ENCODE measurements at regions of chr19 and their contacts with region 1.

Region 1: GRCh38 chr19:51570962-51571575 is at the start of gene ZNF175:
- DNase-seq: peak; percentile 90 to 96
- ATAC-seq: peak; percentile 100
- H3K4me3 ChIP-seq: peak within 1 kb of the TSS; percentile 66 to 94 (median 82)
- H3K27ac ChIP-seq: peak within 1 kb of the TSS; percentile 77 to 86 (median 82)
- H3K4me1 ChIP-seq: peaks cover 13% of the 10 kb centered on the region in 2 donors
- H3K27me3 ChIP-seq: peaks cover 0 to 11% (median 0%) of the 10 kb centered on the region in 3 donors
- CTCF ChIP-seq: no peak
- POLR2A ChIP-seq: no peak
- total RNA-seq, gene ZNF175: 2.1 to 5.0 (median 2.6) TPM

Region 2: DNA sequence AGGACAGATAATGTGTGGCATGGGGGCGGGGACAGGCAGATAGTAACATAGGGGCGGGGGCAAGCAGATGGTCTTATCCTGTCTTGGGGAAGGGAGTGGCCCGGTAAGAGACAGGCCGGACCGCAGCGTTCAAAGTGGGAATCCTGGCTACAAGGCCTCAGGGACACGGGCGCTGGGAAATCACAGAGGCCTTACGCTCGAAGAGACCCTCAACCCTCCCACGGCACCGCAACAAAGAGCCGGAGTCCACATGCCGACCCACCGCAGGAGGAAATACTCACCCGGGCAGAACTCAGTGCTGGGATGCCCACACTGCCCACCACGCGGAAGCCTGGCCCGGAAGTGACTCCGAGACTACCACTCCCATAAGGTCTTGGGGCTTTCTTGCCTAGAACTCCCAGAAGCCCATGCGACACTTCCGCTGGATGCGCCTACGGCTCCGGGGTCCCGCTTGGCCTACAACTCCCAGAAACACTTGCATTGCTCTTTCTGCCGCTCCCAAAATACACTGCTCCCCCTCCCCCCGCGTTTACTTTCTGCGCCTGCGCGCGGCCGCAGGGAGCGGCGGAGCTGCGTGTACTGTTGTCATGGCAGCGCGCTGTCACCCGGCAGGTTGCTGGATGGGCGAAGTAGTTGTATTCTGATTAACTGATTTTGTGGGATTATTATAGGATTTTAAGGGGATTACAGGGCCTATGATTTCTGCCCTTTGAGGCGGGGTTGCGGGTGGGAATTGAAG is 462.8 kb before region 1 on chr19 and contains the start of gene CTU1:
- in situ Hi-C with region 1: loop called in 1 of 4 experiments (anchors 25 kb)
- intact Hi-C with region 1: loop called (anchors 1 kb)
- DNase-seq: peak; percentile 98 to 99
- ATAC-seq: peak; percentile 100
- H3K4me3 ChIP-seq: peak within 1 kb of the TSS; percentile 65 to 87 (median 76)
- H3K27ac ChIP-seq: peak within 1 kb of the TSS; percentile 68 to 77 (median 74)
- H3K4me1 ChIP-seq: peaks cover 8 to 14% of the 10 kb centered on the region in 2 donors
- H3K27me3 ChIP-seq: no peaks in the 10 kb centered on the region
- CTCF ChIP-seq: peak in 2 of 5 experiments; percentile 24 to 26
- POLR2A ChIP-seq: peak; percentile 34 to 63
- total RNA-seq, gene CTU1: 5.8 to 11.9 (median 9.3) TPM

Region 3: DNA sequence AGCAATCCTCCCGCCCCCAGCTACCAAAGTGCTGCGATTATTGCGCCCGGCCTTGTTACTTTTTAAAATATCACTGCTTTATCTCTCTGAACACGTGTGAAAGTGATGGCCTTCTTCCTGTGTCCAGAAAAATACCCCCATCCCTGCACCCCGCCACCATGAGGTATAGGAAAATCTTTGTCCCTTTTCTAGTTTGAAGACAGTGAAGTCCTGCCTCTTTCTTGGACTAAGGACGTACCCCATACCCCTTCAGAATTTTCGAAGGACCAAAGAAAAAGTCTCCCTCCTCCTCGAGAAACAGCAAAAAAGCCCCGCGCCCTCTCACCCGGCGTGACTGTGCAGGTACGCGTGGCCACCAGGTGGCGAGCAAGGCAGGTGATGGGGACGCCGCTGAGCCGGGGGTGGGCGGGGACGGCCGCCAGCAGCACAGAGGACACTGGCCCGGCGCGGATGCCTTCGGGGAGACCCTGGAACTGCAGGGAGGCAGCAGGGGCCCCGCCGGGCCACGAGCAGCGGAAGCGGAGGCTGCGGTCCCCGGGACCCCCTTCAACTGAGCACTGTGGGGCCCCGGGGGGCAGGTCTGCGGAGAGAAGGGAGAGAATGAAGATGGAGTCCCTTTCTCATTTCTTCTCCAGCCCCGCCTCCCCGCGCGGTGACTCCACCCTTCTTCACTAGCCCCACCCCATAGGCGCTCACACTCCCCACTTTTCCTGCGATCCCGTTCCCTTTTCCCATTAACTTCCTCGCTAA is 232.3 kb before region 1 on chr19:
- in situ Hi-C with region 1: no loop called
- intact Hi-C with region 1: loop called (anchors 5 kb)
- DNase-seq: peak; percentile 36 to 48
- ATAC-seq: peak; percentile 47 to 54
- H3K4me3 ChIP-seq: peak overlapping the region; percentile 49 to 60 (median 55)
- H3K27ac ChIP-seq: peak overlapping the region in 2 of 4 donors; percentile 39 to 59
- H3K4me1 ChIP-seq: peaks cover 4 to 17% of the 10 kb centered on the region in 2 donors
- H3K27me3 ChIP-seq: peaks cover 0 to 9% (median 0%) of the 10 kb centered on the region in 3 donors
- CTCF ChIP-seq: peak; percentile 45 to 92 (median 85)
- POLR2A ChIP-seq: no peak

Region 4: DNA sequence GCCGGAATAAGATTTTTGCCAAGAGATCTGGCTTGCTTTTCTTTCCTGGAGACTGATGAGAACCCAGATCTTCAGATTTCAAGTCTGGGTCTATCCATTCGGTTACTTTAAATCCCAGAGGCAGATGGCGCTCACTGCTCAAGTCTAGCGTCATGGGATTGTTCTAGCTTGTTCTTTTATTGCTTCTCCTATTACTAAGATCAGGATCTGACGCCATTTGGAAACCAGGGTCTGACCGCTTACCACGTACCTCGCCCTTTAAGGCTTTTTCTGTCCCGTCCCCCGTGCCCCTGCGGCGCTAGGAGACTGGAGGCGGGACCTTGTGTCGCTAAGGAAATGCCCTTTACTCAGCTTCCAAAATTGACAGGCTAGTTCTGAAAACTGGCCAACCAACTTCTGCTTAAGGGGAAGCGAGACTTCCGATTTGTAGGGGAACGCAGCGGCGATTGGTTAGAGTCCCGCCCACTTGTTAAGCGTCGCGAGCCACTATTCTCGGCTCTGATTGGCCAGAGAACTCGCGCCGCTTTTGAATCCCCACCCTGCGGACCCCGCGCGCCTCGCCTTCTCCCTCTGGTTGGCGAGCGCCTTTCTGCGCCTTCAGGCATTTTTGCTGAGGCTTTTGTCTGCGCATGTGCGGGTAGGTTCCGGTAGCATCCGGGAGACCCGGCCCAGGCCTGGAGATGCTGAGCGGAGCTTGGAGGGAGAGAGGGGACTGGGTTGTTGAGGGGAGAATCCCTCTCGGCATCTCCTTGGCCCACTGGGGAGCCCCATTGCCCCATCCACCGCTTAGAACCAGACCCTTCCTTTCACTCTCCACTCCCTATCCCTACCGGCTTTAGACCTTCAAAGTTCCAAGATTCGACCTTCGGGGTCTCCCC is 176.9 kb before region 1 on chr19:
- in situ Hi-C with region 1: no loop called
- intact Hi-C with region 1: loop called (anchors 5 kb)
- DNase-seq: peak; percentile 90 to 92
- ATAC-seq: peak; percentile 99 to 100
- H3K4me3 ChIP-seq: peak overlapping the region; percentile 28 to 56 (median 52)
- H3K27ac ChIP-seq: peak overlapping the region; percentile 60 to 80 (median 66)
- H3K4me1 ChIP-seq: peaks cover 7 to 9% of the 10 kb centered on the region in 2 donors
- H3K27me3 ChIP-seq: no peaks in the 10 kb centered on the region
- CTCF ChIP-seq: no peak
- POLR2A ChIP-seq: no peak

Region 5: DNA sequence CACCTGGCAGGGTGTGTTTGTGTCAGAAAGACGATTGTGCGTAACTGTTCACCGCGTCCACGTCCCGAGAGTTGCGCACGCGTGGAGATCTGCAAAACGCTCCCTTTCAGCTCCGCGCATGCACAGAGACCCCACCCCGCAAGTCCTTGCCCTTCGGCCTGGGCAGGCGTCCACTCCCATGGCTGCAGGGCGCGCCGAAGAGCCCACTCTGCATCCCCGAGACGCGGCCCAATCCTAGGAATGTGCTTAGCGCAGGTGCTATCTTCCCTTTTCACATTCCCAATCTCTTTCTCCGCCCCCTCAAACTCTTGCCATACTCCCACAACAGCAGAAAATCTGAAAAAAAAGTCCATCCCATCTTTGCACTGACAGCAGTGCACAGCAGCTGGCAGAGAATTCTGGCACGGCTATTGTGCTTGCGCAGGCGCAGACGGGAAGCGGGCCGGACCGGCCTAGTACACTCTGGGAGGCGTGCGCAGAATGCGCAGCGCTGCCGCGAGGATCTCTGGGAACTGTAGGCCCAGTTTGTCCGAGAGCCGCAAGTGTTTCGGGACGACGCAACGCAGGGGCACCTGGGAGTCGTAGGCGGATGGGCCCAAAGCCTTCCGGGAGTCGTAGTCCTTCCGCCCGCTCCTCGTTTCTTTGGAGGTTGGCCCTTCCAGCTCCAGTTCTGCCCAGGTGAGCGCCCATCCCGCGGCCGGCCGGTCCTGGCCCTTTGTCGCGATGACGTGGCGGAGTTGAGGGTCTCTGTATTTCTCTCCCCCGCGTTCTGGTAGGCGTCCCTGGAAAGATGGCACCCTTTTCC is 23.1 kb after region 1 on chr19:
- in situ Hi-C with region 1: no loop called
- intact Hi-C with region 1: loop called (anchors 1 kb)
- DNase-seq: peak; percentile 97
- ATAC-seq: peak; percentile 99 to 100
- H3K4me3 ChIP-seq: peak overlapping the region; percentile 66 to 80 (median 73)
- H3K27ac ChIP-seq: peak overlapping the region; percentile 32 to 71 (median 52)
- H3K4me1 ChIP-seq: peaks cover 8 to 14% of the 10 kb centered on the region in 2 donors
- H3K27me3 ChIP-seq: peaks cover 5 to 9% (median 8%) of the 10 kb centered on the region in 3 donors
- CTCF ChIP-seq: no peak
- POLR2A ChIP-seq: no peak

Region 6: GRCh38 chr19:51660975-51661600 is 90.0 kb after region 1 on chr19:
- in situ Hi-C with region 1: no loop called
- intact Hi-C with region 1: loop called (anchors 1 kb)
- DNase-seq: no peak
- ATAC-seq: no peak
- H3K4me3 ChIP-seq: no peak overlapping the region
- H3K27ac ChIP-seq: no peak overlapping the region
- H3K4me1 ChIP-seq: no peaks in the 10 kb centered on the region
- H3K27me3 ChIP-seq: peaks cover 0 to 7% (median 0%) of the 10 kb centered on the region in 3 donors
- CTCF ChIP-seq: peak in 3 of 5 experiments; percentile 14 to 44 (median 23)
- POLR2A ChIP-seq: no peak

Region 7: GRCh38 chr19:51904331-51905165 is 333.5 kb after region 1 on chr19 and contains the start of gene ZNF649:
- in situ Hi-C with region 1: no loop called
- intact Hi-C with region 1: loop called (anchors 10 kb)
- DNase-seq: peak; percentile 59 to 79
- ATAC-seq: peak; percentile 99 to 100
- H3K4me3 ChIP-seq: peak within 1 kb of the TSS; percentile 71 to 86 (median 78)
- H3K27ac ChIP-seq: peak within 1 kb of the TSS; percentile 80 to 92 (median 85)
- H3K4me1 ChIP-seq: peaks cover 10 to 15% of the 10 kb centered on the region in 2 donors
- H3K27me3 ChIP-seq: peaks cover 0 to 9% (median 5%) of the 10 kb centered on the region in 3 donors
- CTCF ChIP-seq: no peak
- POLR2A ChIP-seq: no peak
- total RNA-seq, gene ZNF649: 2.6 to 4.7 (median 4.1) TPM